ENCODE measurements at regions of chr3 and their contacts with region 1.

Region 1: GRCh38 chr3:4350789-4351163 is 47.6 kb downstream of the SETMAR start:
- DNase-seq: peak; percentile 65 to 72 (median 70)
- H3K4me3 ChIP-seq: peak overlapping the region in 1 of 2 donors; percentile 45
- H3K4me3 Mint-ChIP-seq: peak overlapping the region; percentile 59 to 84 (median 76)
- H3K27ac ChIP-seq: no peak overlapping the region
- H3K27ac Mint-ChIP-seq: peak overlapping the region in 5 of 7 donors; percentile 20 to 66 (median 33)
- H3K4me1 ChIP-seq: peaks cover 4% of the 10 kb centered on the region
- H3K4me1 Mint-ChIP-seq: peaks cover 8 to 18% (median 10%) of the 10 kb centered on the region in 4 donors
- H3K27me3 ChIP-seq: no peaks in the 10 kb centered on the region
- H3K27me3 Mint-ChIP-seq: no peaks in the 10 kb centered on the region

Region 2: DNA sequence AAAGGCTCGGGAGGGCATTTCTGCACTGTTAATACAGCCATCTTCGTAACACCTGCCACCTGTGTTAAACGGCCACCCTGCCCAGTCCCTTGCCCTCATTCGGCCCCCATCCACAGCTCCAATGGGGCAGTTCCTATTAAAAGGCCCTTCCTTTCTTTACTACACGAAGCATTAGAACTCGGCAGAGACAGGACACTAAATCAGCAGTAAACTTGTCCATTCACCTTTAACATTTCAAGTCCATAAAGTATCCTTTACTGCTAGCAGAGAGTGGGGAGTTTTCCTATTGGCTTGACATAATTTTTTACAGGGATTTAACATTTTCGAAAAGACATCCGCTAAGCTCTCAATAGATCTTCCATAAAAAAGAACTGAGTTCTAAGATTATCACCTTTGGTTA is 475.3 kb before region 1 on chr3:
- CTCF ChIA-PET with region 1: no interaction called
- POLR2A ChIA-PET with region 1: no interaction called
- intact Hi-C with region 1: no loop called
- DNase-seq: no peak
- H3K4me3 ChIP-seq: no peak overlapping the region
- H3K4me3 Mint-ChIP-seq: no peak overlapping the region
- H3K27ac ChIP-seq: no peak overlapping the region
- H3K27ac Mint-ChIP-seq: no peak overlapping the region
- H3K4me1 ChIP-seq: no peaks in the 10 kb centered on the region
- H3K4me1 Mint-ChIP-seq: no peaks in the 10 kb centered on the region
- H3K27me3 ChIP-seq: no peaks in the 10 kb centered on the region
- H3K27me3 Mint-ChIP-seq: no peaks in the 10 kb centered on the region

Region 3: GRCh38 chr3:4231041-4231440 is 119.7 kb before region 1 on chr3:
- CTCF ChIA-PET with region 1: no interaction called
- POLR2A ChIA-PET with region 1: no interaction called
- intact Hi-C with region 1: no loop called
- DNase-seq: no peak
- H3K4me3 ChIP-seq: no peak overlapping the region
- H3K4me3 Mint-ChIP-seq: no peak overlapping the region
- H3K27ac ChIP-seq: no peak overlapping the region
- H3K27ac Mint-ChIP-seq: no peak overlapping the region
- H3K4me1 ChIP-seq: no peaks in the 10 kb centered on the region
- H3K4me1 Mint-ChIP-seq: no peaks in the 10 kb centered on the region
- H3K27me3 ChIP-seq: no peaks in the 10 kb centered on the region
- H3K27me3 Mint-ChIP-seq: no peaks in the 10 kb centered on the region

Region 4: DNA sequence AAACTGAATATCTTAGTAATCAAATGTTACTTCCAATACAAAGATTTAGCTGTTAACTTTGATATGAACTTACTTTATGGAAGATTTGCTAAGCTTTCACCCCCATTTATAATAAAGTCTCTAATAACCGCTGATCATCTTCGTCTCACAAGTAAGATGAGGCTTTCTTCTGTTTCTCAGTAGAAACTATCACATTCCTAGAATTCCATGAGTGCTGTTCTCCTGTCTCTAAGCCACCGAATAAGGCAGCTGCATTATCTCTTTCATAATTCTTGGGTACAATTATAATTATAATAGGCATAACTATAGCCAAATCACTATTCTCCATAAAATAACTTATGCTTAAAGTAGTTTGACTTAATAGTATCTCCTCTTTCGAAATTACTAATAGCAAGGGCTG is 65.9 kb before region 1 on chr3:
- CTCF ChIA-PET with region 1: no interaction called
- POLR2A ChIA-PET with region 1: no interaction called
- intact Hi-C with region 1: no loop called
- DNase-seq: no peak
- H3K4me3 ChIP-seq: no peak overlapping the region
- H3K4me3 Mint-ChIP-seq: no peak overlapping the region
- H3K27ac ChIP-seq: no peak overlapping the region
- H3K27ac Mint-ChIP-seq: no peak overlapping the region
- H3K4me1 ChIP-seq: no peaks in the 10 kb centered on the region
- H3K4me1 Mint-ChIP-seq: no peaks in the 10 kb centered on the region
- H3K27me3 ChIP-seq: no peaks in the 10 kb centered on the region
- H3K27me3 Mint-ChIP-seq: peaks cover 0 to 2% of the 10 kb centered on the region in 2 donors

Region 5: DNA sequence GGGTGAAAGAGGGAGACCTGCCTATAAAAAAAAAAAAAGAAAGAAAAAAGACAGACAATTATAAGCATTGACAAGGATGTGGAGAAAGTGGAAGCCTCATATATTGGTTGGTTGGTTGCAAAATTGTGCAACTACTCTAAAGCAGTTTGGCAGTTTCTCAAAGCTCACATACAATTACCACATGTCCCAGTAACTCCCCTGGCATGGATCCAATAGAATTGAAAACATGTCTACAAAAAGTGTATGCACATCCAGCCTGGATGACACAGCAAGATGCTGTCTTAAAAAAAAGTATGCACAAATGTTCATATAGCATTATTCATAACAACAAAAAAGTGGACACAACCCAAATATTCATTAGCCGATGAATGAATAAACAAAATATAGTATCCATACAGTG is 28.1 kb before region 1 on chr3:
- CTCF ChIA-PET with region 1: no interaction called
- POLR2A ChIA-PET with region 1: no interaction called
- intact Hi-C with region 1: no loop called
- DNase-seq: no peak
- H3K4me3 ChIP-seq: no peak overlapping the region
- H3K4me3 Mint-ChIP-seq: no peak overlapping the region
- H3K27ac ChIP-seq: no peak overlapping the region
- H3K27ac Mint-ChIP-seq: peak overlapping the region in 2 of 7 donors; percentile 34 to 76
- H3K4me1 ChIP-seq: no peaks in the 10 kb centered on the region
- H3K4me1 Mint-ChIP-seq: peaks cover 0 to 4% (median under 1%) of the 10 kb centered on the region in 4 donors
- H3K27me3 ChIP-seq: no peaks in the 10 kb centered on the region
- H3K27me3 Mint-ChIP-seq: no peaks in the 10 kb centered on the region

Region 6: GRCh38 chr3:4334548-4334947 is 16.2 kb before region 1 on chr3:
- CTCF ChIA-PET with region 1: interaction called, 29 read pairs
- POLR2A ChIA-PET with region 1: no interaction called
- intact Hi-C with region 1: no loop called
- DNase-seq: no peak
- H3K4me3 ChIP-seq: no peak overlapping the region
- H3K4me3 Mint-ChIP-seq: no peak overlapping the region
- H3K27ac ChIP-seq: no peak overlapping the region
- H3K27ac Mint-ChIP-seq: peak overlapping the region in 1 of 7 donors; percentile 15
- H3K4me1 ChIP-seq: no peaks in the 10 kb centered on the region
- H3K4me1 Mint-ChIP-seq: no peaks in the 10 kb centered on the region
- H3K27me3 ChIP-seq: no peaks in the 10 kb centered on the region
- H3K27me3 Mint-ChIP-seq: no peaks in the 10 kb centered on the region

Region 7: GRCh38 chr3:4373669-4374068 is 22.9 kb after region 1 on chr3:
- CTCF ChIA-PET with region 1: interaction called, 13 read pairs
- POLR2A ChIA-PET with region 1: no interaction called
- intact Hi-C with region 1: no loop called
- DNase-seq: no peak
- H3K4me3 ChIP-seq: no peak overlapping the region
- H3K4me3 Mint-ChIP-seq: no peak overlapping the region
- H3K27ac ChIP-seq: no peak overlapping the region
- H3K27ac Mint-ChIP-seq: no peak overlapping the region
- H3K4me1 ChIP-seq: no peaks in the 10 kb centered on the region
- H3K4me1 Mint-ChIP-seq: peaks cover 0 to 1% (median 0%) of the 10 kb centered on the region in 4 donors
- H3K27me3 ChIP-seq: no peaks in the 10 kb centered on the region
- H3K27me3 Mint-ChIP-seq: no peaks in the 10 kb centered on the region

Region 8: GRCh38 chr3:4512895-4513616 is 162.3 kb after region 1 on chr3:
- CTCF ChIA-PET with region 1: interaction called, 14 read pairs
- POLR2A ChIA-PET with region 1: no interaction called
- intact Hi-C with region 1: no loop called
- DNase-seq: no peak
- H3K4me3 ChIP-seq: no peak overlapping the region
- H3K4me3 Mint-ChIP-seq: no peak overlapping the region
- H3K27ac ChIP-seq: no peak overlapping the region
- H3K27ac Mint-ChIP-seq: peak overlapping the region in 2 of 7 donors; percentile 39
- H3K4me1 ChIP-seq: peaks cover 12% of the 10 kb centered on the region
- H3K4me1 Mint-ChIP-seq: peaks cover 17 to 20% (median 19%) of the 10 kb centered on the region in 4 donors
- H3K27me3 ChIP-seq: no peaks in the 10 kb centered on the region
- H3K27me3 Mint-ChIP-seq: no peaks in the 10 kb centered on the region

Region 9: GRCh38 chr3:4571690-4572334 is 221.0 kb after region 1 on chr3:
- CTCF ChIA-PET with region 1: interaction called, 18 read pairs
- POLR2A ChIA-PET with region 1: no interaction called
- intact Hi-C with region 1: loop called (anchors 1 kb)
- DNase-seq: peak in 2 of 5 donors; percentile 7 to 10
- H3K4me3 ChIP-seq: no peak overlapping the region
- H3K4me3 Mint-ChIP-seq: no peak overlapping the region
- H3K27ac ChIP-seq: no peak overlapping the region
- H3K27ac Mint-ChIP-seq: peak overlapping the region in 1 of 7 donors; percentile 8
- H3K4me1 ChIP-seq: no peaks in the 10 kb centered on the region
- H3K4me1 Mint-ChIP-seq: peaks cover 8 to 40% (median 15%) of the 10 kb centered on the region in 4 donors
- H3K27me3 ChIP-seq: no peaks in the 10 kb centered on the region
- H3K27me3 Mint-ChIP-seq: no peaks in the 10 kb centered on the region

Region 10: DNA sequence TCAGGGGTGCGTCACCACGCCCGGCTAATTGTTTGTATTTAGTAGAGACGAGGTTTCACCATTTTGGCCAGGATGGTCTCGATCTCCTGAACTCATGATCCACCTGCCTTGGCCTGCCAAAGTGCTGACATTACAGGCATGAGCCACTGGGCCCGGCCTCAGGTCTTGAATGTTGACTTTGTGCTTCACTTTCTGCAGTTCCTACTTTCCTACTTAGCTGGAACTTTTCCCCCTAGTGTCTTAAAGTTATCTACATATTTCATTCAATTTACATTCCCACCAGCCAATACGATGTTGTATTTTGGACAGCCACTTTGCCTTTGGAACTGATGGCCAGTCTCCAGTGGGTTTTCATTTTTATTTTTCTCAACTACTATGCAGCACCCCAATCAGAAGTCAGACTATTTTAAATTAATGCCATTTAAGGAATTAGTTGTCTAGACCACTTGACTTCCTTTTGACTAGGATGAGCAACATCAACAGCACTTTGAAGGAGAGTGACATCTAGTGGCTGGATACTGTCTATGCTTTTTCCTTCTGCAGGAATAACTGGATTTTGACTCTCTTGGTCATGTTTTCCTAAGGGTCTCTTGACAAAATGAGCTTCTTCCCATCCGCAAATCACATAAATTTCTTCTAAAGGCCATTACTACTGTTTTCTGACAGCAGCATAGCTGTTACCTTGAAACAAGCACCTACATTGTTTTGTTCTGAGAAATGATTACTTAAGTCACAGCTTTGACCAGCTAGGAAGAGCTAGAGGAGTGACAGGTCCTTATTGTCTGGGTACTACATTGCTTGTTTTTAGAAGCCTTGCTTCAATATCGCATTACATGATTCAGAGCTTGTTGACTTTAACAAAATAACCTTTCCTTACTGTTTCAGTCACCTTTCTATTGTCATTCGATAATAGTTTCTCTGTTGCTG is 282.6 kb after region 1 on chr3:
- CTCF ChIA-PET with region 1: interaction called, 185 read pairs
- POLR2A ChIA-PET with region 1: interaction called, 7 read pairs
- intact Hi-C with region 1: loop called (anchors 1 kb)
- DNase-seq: peak in 4 of 5 donors; percentile 38 to 50 (median 44)
- H3K4me3 ChIP-seq: no peak overlapping the region
- H3K4me3 Mint-ChIP-seq: no peak overlapping the region
- H3K27ac ChIP-seq: no peak overlapping the region
- H3K27ac Mint-ChIP-seq: peak overlapping the region in 1 of 7 donors; percentile 52
- H3K4me1 ChIP-seq: no peaks in the 10 kb centered on the region
- H3K4me1 Mint-ChIP-seq: peaks cover 6 to 11% (median 8%) of the 10 kb centered on the region in 4 donors
- H3K27me3 ChIP-seq: no peaks in the 10 kb centered on the region
- H3K27me3 Mint-ChIP-seq: no peaks in the 10 kb centered on the region

Region 11: DNA sequence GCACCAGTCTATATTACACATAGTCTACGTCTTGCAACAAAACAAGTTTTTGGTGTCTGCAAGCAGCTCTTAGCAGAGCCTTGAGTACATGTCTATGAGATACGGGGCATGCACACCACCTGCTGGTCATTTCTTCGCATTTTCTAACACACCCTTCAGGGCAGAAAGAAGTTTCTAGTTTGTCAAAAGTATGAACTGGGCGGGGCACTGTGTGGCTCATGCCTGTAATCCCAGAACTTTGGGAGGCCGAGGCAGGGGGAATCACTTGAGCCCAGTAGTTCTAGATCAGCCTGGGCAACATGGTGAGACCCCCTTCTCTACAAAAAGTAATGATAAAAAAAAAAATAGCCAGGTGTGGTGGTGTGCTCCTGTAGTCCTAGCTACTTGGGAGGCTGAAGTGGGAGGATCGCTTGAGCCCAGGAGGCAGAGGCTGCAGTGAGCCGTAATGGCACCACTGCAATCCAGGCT is 707.1 kb after region 1 on chr3:
- CTCF ChIA-PET with region 1: interaction called, 7 read pairs
- POLR2A ChIA-PET with region 1: no interaction called
- intact Hi-C with region 1: loop called (anchors 1 kb)
- DNase-seq: peak; percentile 66 to 82 (median 70)
- H3K4me3 ChIP-seq: no peak overlapping the region
- H3K4me3 Mint-ChIP-seq: no peak overlapping the region
- H3K27ac ChIP-seq: no peak overlapping the region
- H3K27ac Mint-ChIP-seq: no peak overlapping the region
- H3K4me1 ChIP-seq: peaks cover 3% of the 10 kb centered on the region
- H3K4me1 Mint-ChIP-seq: peaks cover 0 to 4% (median 1%) of the 10 kb centered on the region in 4 donors
- H3K27me3 ChIP-seq: no peaks in the 10 kb centered on the region
- H3K27me3 Mint-ChIP-seq: peaks cover 1% of the 10 kb centered on the region in 2 donors